ENCODE measurements at regions of chr18 and their contacts with region 1.

Region 1: GRCh38 chr18:48777026-48777743 is 173.6 kb downstream of the SMAD7 start:
- DNase-seq: peak; percentile 78
- H3K4me3 ChIP-seq: no peak overlapping the region
- H3K27ac ChIP-seq: no peak overlapping the region
- H3K4me1 ChIP-seq: peaks cover 6% of the 10 kb centered on the region
- H3K27me3 ChIP-seq: no peaks in the 10 kb centered on the region
- CTCF ChIP-seq: peak; percentile 97

Region 2: GRCh38 chr18:48613589-48614404 is 163.4 kb before region 1 on chr18:
- CTCF ChIA-PET with region 1: no interaction called
- POLR2A ChIA-PET with region 1: no interaction called
- intact Hi-C with region 1: no loop called
- DNase-seq: no peak
- H3K4me3 ChIP-seq: no peak overlapping the region
- H3K27ac ChIP-seq: no peak overlapping the region
- H3K4me1 ChIP-seq: no peaks in the 10 kb centered on the region
- H3K27me3 ChIP-seq: no peaks in the 10 kb centered on the region
- CTCF ChIP-seq: no peak

Region 3: GRCh38 chr18:48951448-48952286 is 174.5 kb after region 1 on chr18:
- CTCF ChIA-PET with region 1: no interaction called
- POLR2A ChIA-PET with region 1: no interaction called
- intact Hi-C with region 1: loop called (anchors 5 kb)
- DNase-seq: peak; percentile 89
- H3K4me3 ChIP-seq: peak overlapping the region; percentile 73
- H3K27ac ChIP-seq: peak overlapping the region; percentile 67
- H3K4me1 ChIP-seq: peaks cover 14% of the 10 kb centered on the region
- H3K27me3 ChIP-seq: no peaks in the 10 kb centered on the region
- CTCF ChIP-seq: 0 out of 2 replicates have a peak, but pooled peaks have one; percentile 13

Region 4: GRCh38 chr18:49041435-49042245 is 264.5 kb after region 1 on chr18:
- CTCF ChIA-PET with region 1: interaction called, 8 read pairs
- POLR2A ChIA-PET with region 1: no interaction called
- intact Hi-C with region 1: loop called (anchors 10 kb)
- DNase-seq: peak; percentile 49
- H3K4me3 ChIP-seq: no peak overlapping the region
- H3K27ac ChIP-seq: no peak overlapping the region
- H3K4me1 ChIP-seq: no peaks in the 10 kb centered on the region
- H3K27me3 ChIP-seq: no peaks in the 10 kb centered on the region
- CTCF ChIP-seq: peak; percentile 68

Region 5: DNA sequence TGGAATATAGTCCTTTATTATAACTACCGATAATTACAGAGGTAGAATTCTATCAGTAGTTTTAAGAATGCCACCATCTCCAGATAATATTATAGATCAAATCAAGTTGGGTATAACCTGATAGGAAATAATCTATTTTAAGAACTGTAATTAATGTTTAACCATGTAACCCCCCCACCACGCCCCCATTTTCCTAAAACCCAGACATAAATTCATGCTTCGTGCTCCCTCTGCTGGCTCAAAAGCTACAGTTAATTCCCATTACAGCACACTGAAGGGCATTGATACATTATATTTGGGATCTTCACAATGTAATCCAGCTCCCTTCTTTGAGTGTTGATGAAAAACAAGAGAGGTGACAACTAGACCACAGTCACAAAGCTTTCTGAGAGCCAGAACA is 401.6 kb after region 1 on chr18:
- CTCF ChIA-PET with region 1: interaction called, 13 read pairs
- POLR2A ChIA-PET with region 1: no interaction called
- intact Hi-C with region 1: loop called (anchors 5 kb)
- DNase-seq: peak; percentile 35
- H3K4me3 ChIP-seq: no peak overlapping the region
- H3K27ac ChIP-seq: no peak overlapping the region
- H3K4me1 ChIP-seq: peaks cover 13% of the 10 kb centered on the region
- H3K27me3 ChIP-seq: no peaks in the 10 kb centered on the region
- CTCF ChIP-seq: peak; percentile 72

Region 6: DNA sequence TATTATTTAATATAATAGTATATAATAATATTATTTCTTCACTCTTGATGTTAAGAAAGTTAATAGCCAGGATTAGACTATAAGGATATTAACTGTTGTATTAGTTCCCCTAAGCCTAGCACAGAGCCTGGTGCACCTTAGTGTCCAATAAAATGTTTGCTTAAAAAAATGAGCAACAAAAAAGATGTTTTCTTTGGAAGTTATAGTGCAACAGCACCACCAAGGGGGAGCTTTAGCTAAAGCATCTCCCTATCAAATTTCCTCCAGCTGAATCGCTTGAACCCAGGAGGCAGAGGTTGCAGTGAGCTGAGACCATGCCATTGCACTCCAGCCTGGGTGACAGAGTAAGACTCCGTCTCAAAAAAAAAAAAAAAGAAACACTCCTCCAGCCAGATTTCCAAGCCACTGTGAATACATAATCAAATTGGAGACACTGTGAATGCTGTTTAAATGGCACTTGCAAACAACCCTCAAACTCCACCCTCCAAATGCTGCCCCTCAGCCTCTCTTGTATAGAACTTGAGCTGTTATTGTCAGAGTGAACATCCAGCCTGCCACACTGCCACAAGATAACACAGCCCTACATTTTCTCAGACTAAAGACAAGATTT is 461.4 kb after region 1 on chr18:
- CTCF ChIA-PET with region 1: no interaction called
- POLR2A ChIA-PET with region 1: no interaction called
- intact Hi-C with region 1: loop called (anchors 5 kb)
- DNase-seq: peak; percentile 72
- H3K4me3 ChIP-seq: no peak overlapping the region
- H3K27ac ChIP-seq: no peak overlapping the region
- H3K4me1 ChIP-seq: no peaks in the 10 kb centered on the region
- H3K27me3 ChIP-seq: no peaks in the 10 kb centered on the region
- CTCF ChIP-seq: peak; percentile 63

Region 7: DNA sequence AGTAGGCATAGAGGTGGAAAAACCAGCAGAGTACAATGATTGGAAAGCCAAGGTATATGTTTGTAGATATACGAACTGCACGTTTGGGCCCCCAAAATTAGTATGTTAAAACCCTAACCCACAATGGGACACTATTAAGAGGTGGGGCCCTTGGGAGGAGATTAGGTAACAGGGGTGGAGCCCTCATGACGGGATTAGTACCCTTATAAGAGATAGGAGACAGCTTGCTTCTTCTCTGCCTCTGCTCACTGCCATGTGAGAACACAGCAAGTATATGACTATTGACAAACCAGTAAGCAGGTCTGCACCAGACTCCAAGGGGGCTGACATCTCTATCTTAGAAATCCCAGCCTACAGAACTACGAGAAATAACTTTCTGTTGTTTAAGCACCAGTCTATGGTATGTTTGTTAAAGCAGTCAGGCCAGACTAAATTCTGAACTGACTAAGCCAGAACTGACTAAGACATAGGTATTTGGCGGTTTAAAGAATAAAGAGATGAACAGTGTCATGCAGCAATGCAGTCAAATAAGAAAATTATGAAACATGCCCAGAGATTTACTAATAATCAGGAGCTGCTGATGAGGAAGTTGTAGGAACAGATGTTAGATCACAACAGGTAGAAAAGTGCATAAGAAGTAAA is 500.3 kb after region 1 on chr18:
- CTCF ChIA-PET with region 1: no interaction called
- POLR2A ChIA-PET with region 1: no interaction called
- intact Hi-C with region 1: no loop called
- DNase-seq: no peak
- H3K4me3 ChIP-seq: no peak overlapping the region
- H3K27ac ChIP-seq: no peak overlapping the region
- H3K4me1 ChIP-seq: peaks cover 10% of the 10 kb centered on the region
- H3K27me3 ChIP-seq: no peaks in the 10 kb centered on the region
- CTCF ChIP-seq: no peak

Region 8: DNA sequence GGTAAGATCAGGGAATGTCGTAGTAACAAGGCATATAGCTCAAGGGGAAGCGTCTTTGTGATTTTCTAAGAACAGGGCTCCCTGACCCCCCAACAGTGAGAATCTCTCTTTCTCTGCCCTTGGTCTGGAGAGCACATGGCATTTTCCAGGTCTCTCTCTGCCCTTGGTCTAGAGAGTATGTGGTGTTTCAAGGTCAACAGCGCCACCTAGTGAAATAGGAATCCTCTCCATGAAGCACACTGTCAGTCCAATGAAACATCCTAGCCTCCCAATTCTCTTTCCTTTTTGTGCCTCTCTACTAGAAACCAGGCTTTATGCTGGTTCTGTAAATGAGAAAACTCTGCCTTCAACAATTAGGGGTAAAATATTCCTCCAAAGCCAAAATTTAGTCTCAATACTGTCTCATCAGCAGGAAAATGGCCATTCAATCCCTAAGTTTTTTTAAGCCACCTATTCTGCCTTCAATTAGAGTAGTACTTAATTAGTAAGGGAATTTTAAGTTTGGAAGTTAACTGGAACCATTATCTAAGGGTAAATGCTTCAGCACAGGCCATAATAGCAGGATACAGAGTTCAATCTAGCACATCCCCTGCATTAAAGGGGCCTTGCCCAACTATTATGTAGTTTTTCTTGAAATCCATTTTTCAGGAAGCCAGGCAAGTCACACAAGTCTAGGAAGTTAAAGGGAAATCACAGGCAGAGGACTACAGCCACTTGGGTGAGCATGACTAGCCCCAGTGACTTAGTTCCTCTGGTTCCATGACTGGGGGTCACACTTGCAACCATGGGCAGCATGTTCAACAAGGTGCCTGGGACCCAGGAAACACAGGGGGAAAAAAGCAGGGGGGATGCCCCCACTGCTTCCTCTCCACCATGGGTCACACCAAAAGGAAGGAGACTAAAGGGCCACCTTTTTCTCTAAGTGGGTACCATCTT is 670.9 kb after region 1 on chr18:
- CTCF ChIA-PET with region 1: no interaction called
- POLR2A ChIA-PET with region 1: no interaction called
- intact Hi-C with region 1: loop called (anchors 10 kb)
- DNase-seq: peak; percentile 81
- H3K4me3 ChIP-seq: no peak overlapping the region
- H3K27ac ChIP-seq: no peak overlapping the region
- H3K4me1 ChIP-seq: no peaks in the 10 kb centered on the region
- H3K27me3 ChIP-seq: no peaks in the 10 kb centered on the region
- CTCF ChIP-seq: peak; percentile 74